Calu3 (cell line): ENCODE measurements at regions of chr12 and their contacts with region 1.

Region 1: GRCh38 chr12:101909646-101910045 is 32.3 kb downstream of the DRAM1 start:
- DNase-seq: no peak
- H3K4me3 Mint-ChIP-seq: peak overlapping the region; percentile 19
- H3K27ac Mint-ChIP-seq: peak overlapping the region; percentile 61
- H3K4me1 Mint-ChIP-seq: peaks cover 21% of the 10 kb centered on the region
- H3K27me3 Mint-ChIP-seq: no peaks in the 10 kb centered on the region
- CTCF ChIP-seq: no peak

Region 2: GRCh38 chr12:101891462-101892273 is 18.0 kb before region 1 on chr12:
- CTCF ChIA-PET with region 1: interaction called, 15 read pairs
- intact Hi-C with region 1: no loop called
- DNase-seq: peak; percentile 24
- H3K4me3 Mint-ChIP-seq: no peak overlapping the region
- H3K27ac Mint-ChIP-seq: no peak overlapping the region
- H3K4me1 Mint-ChIP-seq: peaks cover 9% of the 10 kb centered on the region
- H3K27me3 Mint-ChIP-seq: no peaks in the 10 kb centered on the region
- CTCF ChIP-seq: no peak

Region 3: GRCh38 chr12:102347811-102348210 is 438.2 kb after region 1 on chr12:
- CTCF ChIA-PET with region 1: interaction called, 11 read pairs
- intact Hi-C with region 1: no loop called
- DNase-seq: no peak
- H3K4me3 Mint-ChIP-seq: no peak overlapping the region
- H3K27ac Mint-ChIP-seq: no peak overlapping the region
- H3K4me1 Mint-ChIP-seq: peaks cover 8% of the 10 kb centered on the region
- H3K27me3 Mint-ChIP-seq: no peaks in the 10 kb centered on the region
- CTCF ChIP-seq: no peak